Caco-2 (cell line): ENCODE measurements at regions of chr12 and their contacts with region 1.

Region 1: GRCh38 chr12:102169922-102170621 is 27.6 kb downstream of the PMCH start:
- DNase-seq: no peak
- H3K4me3 ChIP-seq: no peak overlapping the region
- H3K4me3 Mint-ChIP-seq: no peak overlapping the region
- H3K27ac Mint-ChIP-seq: no peak overlapping the region
- H3K4me1 ChIP-seq: no peaks in the 10 kb centered on the region
- H3K4me1 Mint-ChIP-seq: no peaks in the 10 kb centered on the region
- H3K27me3 ChIP-seq: no peaks in the 10 kb centered on the region
- H3K27me3 Mint-ChIP-seq: no peaks in the 10 kb centered on the region
- CTCF ChIP-seq: peak; percentile 61 to 65

Region 2: DNA sequence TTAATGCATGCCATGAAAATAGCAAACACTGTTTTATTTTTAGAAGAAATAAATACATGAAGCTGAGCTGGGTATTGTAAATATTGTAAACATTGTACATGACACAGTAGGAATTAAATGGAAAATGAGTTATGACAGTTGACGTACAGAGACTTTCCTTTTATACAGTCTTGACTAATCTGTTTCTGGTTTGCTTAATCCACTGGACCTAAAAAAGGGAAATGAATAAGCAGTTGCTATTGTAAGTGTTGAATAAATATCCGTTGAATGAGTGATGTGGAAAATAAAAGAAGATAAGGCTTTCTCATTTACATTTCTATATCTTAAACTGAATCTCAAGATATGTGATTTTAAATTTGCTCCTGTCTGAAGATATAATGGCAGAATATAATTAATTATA is 12.6 kb after region 1 on chr12:
- CTCF ChIA-PET with region 1: no interaction called
- POLR2A ChIA-PET with region 1: no interaction called
- intact Hi-C with region 1: no loop called
- DNase-seq: no peak
- H3K4me3 ChIP-seq: no peak overlapping the region
- H3K4me3 Mint-ChIP-seq: no peak overlapping the region
- H3K27ac Mint-ChIP-seq: no peak overlapping the region
- H3K4me1 ChIP-seq: no peaks in the 10 kb centered on the region
- H3K4me1 Mint-ChIP-seq: no peaks in the 10 kb centered on the region
- H3K27me3 ChIP-seq: no peaks in the 10 kb centered on the region
- H3K27me3 Mint-ChIP-seq: no peaks in the 10 kb centered on the region
- CTCF ChIP-seq: no peak

Region 3: DNA sequence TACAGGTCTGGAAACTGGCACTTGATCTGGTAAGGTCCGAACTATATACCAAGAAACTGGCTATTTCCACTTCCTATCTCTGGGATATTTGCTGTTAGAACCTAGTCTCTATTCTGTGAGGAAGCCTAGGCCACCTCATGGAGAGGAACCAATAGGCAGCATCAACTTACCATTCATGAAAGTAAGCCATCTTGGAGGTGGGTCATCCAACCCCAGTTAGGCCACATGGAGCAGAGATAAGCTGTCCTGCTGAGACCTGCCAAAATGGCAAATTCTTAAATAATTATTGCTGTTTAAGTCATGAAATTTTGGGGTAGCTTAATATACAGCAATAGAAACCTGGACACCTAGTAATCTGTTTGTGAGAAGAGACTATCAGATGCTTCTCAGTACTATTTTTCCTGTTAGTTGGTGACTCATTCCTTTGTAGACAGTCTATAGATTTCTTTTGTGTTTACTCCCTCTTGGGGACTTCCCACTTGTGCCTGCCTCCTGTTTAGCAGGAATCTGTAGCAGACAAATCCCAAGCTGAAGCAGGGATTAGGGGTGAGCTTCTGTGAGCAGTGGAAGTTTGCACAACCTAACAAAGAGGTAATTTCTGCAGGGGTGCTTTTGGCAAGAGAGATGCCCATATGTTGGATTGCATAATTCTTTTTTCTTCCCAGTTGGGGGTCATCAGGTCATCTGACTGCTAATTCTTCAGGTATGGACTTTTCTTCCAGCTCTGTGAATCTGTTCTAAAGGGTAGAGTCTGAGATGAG is 173.5 kb after region 1 on chr12:
- CTCF ChIA-PET with region 1: no interaction called
- POLR2A ChIA-PET with region 1: no interaction called
- intact Hi-C with region 1: no loop called
- DNase-seq: peak in 1 of 2 experiments; percentile 4
- H3K4me3 ChIP-seq: no peak overlapping the region
- H3K4me3 Mint-ChIP-seq: no peak overlapping the region
- H3K27ac Mint-ChIP-seq: no peak overlapping the region
- H3K4me1 ChIP-seq: peaks cover 6% of the 10 kb centered on the region; the same call in 1 of the 2 replicates
- H3K4me1 Mint-ChIP-seq: no peaks in the 10 kb centered on the region
- H3K27me3 ChIP-seq: no peaks in the 10 kb centered on the region
- H3K27me3 Mint-ChIP-seq: no peaks in the 10 kb centered on the region
- CTCF ChIP-seq: no peak

Region 4: GRCh38 chr12:102484428-102484958 is 314.4 kb after region 1 on chr12:
- CTCF ChIA-PET with region 1: no interaction called
- POLR2A ChIA-PET with region 1: no interaction called
- intact Hi-C with region 1: loop called (anchors 2 kb)
- DNase-seq: peak; percentile 34 to 42
- H3K4me3 ChIP-seq: no peak overlapping the region
- H3K4me3 Mint-ChIP-seq: no peak overlapping the region
- H3K27ac Mint-ChIP-seq: peak overlapping the region; percentile 33
- H3K4me1 ChIP-seq: no peaks in the 10 kb centered on the region
- H3K4me1 Mint-ChIP-seq: no peaks in the 10 kb centered on the region
- H3K27me3 ChIP-seq: no peaks in the 10 kb centered on the region
- H3K27me3 Mint-ChIP-seq: no peaks in the 10 kb centered on the region
- CTCF ChIP-seq: peak; percentile 84 to 85

Region 5: DNA sequence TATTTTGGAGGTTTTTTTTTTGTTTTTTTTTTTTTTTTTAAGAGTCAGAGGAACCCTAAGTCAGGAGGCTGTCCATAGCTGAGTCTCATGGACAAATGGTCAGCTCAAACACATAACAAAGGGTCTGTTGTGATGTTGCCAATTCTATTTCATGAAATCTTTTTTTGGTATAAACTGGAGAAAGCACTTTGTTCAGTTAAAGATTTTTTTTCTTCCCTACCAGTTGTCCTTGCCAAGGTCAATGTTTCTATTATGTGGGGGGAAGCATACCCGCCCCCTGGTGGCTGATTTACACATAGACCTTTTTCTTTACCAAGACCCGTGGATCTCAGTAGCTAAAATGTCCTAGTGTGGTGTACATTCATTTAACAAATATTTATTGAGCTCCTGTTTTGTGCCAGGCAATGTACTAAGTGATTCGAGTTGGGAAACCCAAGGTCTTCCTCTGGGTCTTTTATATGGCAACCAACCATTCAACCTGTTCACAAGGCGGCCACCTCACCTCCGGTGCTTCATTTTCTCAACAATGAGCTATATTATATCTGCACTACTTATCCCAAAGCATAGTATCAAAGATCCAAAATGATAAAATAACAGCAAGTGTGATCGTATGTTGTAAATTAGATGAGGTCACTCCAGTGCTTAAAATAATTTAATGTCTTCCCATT is 532.5 kb after region 1 on chr12:
- CTCF ChIA-PET with region 1: interaction called, 6 read pairs
- POLR2A ChIA-PET with region 1: no interaction called
- intact Hi-C with region 1: loop called (anchors 2 kb)
- DNase-seq: peak; percentile 51 to 60
- H3K4me3 ChIP-seq: no peak overlapping the region
- H3K4me3 Mint-ChIP-seq: no peak overlapping the region
- H3K27ac Mint-ChIP-seq: no peak overlapping the region
- H3K4me1 ChIP-seq: no peaks in the 10 kb centered on the region
- H3K4me1 Mint-ChIP-seq: no peaks in the 10 kb centered on the region
- H3K27me3 ChIP-seq: no peaks in the 10 kb centered on the region
- H3K27me3 Mint-ChIP-seq: peaks cover 15% of the 10 kb centered on the region
- CTCF ChIP-seq: peak; percentile 66 to 72

Region 6: DNA sequence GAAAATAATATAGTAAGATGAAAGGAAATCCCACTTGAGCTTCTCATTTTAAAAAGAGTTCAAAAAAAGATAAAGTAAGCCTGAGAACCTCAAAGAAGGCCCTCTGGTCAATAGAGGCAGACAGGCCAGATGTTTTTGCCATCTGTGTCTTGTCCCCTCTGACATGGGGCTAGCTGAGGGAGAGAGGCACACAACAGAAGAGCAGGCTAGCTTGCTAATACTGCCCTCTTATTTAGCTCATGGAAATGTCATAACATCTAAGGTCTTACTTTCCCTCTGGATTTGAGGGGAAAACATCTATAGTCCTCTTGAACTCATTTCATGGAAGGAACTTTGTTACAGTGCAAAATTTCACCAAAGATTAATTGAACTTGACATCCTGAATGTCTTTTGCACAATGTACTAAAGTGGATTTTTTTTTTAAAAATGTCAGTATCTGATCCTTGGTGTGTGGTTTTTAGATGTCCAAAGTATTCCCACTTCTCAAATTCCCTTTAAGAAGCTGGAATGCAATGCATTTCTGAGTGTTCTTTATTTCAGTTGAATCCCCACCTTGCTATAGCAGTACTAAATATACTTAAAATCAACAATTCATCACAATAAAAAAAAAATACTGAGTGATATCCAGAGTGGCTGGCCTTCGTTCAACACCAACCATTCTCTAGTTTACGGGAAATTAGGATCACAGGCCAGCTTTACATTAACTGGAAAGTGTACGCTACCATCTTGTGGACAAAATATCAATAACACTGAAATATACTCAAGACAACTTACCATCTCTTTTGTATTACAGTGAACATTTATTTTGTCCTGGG is 570.3 kb after region 1 on chr12:
- CTCF ChIA-PET with region 1: no interaction called
- POLR2A ChIA-PET with region 1: no interaction called
- intact Hi-C with region 1: loop called (anchors 1 kb)
- DNase-seq: peak in 1 of 2 experiments; percentile 4
- H3K4me3 ChIP-seq: no peak overlapping the region
- H3K4me3 Mint-ChIP-seq: no peak overlapping the region
- H3K27ac Mint-ChIP-seq: no peak overlapping the region
- H3K4me1 ChIP-seq: no peaks in the 10 kb centered on the region
- H3K4me1 Mint-ChIP-seq: no peaks in the 10 kb centered on the region
- H3K27me3 ChIP-seq: no peaks in the 10 kb centered on the region
- H3K27me3 Mint-ChIP-seq: no peaks in the 10 kb centered on the region
- CTCF ChIP-seq: peak in 1 of 2 experiments; percentile 36